ENCODE measurements at regions of chr9 and their contacts with region 1.

Region 1: DNA sequence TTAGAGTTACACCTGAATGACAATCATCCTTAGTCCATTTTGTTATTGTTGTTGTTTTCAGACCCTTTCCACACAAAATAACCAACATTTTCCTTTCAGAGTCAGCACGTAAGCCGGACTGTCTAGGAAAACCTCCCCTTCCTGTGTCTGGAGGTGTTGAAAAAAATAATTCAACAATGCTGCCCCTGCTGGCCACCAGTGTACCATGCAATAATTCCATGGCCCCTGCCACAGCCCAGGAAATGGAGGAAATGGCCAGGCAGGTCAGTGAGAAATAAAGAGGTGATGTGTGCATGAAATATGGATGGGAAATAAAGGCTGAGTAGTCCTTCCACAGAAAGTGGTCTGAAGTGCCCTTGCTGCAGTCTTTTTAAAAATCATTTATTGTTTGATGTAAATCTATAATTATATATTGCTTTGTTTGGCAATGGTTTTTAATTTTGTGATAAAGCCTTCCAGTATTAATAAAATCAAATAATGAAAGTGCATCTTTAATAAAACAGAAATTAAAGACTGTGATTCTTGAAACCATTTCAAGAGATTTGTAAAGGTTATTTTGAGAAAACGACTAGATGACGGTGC is 152.8 kb upstream of the PAPPA start:
- DNase-seq: peak; percentile 45
- H3K4me3 Mint-ChIP-seq: no peak overlapping the region
- H3K27ac Mint-ChIP-seq: no peak overlapping the region
- H3K4me1 Mint-ChIP-seq: peaks cover 44% of the 10 kb centered on the region
- H3K27me3 Mint-ChIP-seq: no peaks in the 10 kb centered on the region
- CTCF ChIP-seq: peak; percentile 37

Region 2: DNA sequence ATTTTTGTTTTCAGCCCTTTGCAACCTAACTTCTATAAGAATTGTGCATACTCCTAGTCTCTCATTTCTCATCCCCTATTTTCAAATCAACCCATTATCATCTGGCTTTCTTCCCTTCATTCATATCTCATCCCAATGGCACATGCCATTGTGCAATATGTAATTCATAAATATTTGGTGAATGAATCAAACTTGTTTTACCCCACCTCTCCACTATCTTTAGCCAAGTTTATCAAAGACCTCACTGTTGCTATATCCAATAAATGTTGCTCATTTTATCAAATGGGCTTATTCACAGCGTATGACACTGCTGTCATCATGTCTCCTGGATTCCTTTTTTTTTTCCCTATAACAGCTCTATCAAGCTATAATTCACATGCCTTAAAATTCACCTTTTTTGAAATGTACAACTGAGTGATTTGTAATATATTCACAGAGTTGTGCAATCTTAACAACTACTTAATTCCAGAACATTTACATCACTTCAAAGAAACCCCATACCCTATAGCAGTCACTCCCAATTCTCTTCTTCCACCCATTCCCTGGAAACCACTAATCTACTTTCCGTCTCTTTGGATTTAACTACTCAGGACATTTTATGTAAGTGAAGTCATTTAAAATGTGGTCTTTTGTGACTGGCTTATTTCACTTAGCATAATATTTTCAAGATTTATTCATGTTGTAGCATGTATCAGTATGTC is 61.6 kb before region 1 on chr9:
- CTCF ChIA-PET with region 1: interaction called, 6 read pairs
- POLR2A ChIA-PET with region 1: interaction called, 25 read pairs
- intact Hi-C with region 1: loop called (anchors 1 kb)
- DNase-seq: peak; percentile 77
- H3K4me3 Mint-ChIP-seq: peak overlapping the region; percentile 67
- H3K27ac Mint-ChIP-seq: peak overlapping the region; percentile 100
- H3K4me1 Mint-ChIP-seq: peaks cover 43% of the 10 kb centered on the region
- H3K27me3 Mint-ChIP-seq: no peaks in the 10 kb centered on the region
- CTCF ChIP-seq: no peak

Measured in MCF 10A (cell line).